Heart left ventricle (tissue), 16 donors: ENCODE measurements at regions of chr12 and their contacts with region 1.

Region 1: DNA sequence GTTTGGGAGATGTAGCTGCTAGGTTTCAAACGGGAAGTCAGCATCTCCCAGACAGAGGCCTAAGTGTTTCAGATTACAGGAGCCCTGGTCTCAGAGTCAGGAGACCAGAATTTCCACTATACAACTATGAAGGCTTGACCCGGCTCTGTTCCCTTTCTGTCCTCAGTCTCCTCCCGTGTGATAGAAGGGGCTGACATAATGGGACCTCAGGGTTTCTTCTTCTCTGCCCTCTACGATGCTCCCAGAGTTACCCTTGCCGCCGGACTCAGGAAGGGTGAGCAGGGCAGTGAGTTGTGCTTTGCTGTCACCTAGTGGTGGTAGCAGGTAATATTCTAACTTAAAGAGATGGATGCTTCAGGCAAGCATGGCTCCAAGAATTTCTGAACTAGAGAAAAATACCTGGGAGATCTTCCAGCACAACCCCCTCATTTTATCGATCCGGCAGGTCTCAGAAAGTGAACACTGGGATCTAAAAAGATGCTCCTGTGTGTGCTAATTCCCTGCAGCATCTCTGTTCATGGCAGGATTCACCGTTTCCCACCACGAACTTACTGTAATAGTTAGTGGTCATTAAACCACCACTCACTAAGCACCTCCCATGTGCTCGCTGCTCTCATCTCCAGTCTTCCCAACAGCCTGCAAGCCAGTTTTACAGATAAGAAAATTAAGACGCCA is 84.4 kb downstream of the VWF start:
- DNase-seq: peak in 3 of 5 donors; percentile 50 to 59 (median 55)
- ATAC-seq: peak; percentile 49 to 79 (median 72)
- H3K4me3 ChIP-seq: no peak overlapping the region
- H3K27ac ChIP-seq: no peak overlapping the region
- H3K4me1 ChIP-seq: peaks cover 0 to 4% (median 0%) of the 10 kb centered on the region in 12 donors
- H3K27me3 ChIP-seq: no peaks in the 10 kb centered on the region
- CTCF ChIP-seq: peak; percentile 74 to 90 (median 84)
- POLR2A ChIP-seq: no peak

Region 2: DNA sequence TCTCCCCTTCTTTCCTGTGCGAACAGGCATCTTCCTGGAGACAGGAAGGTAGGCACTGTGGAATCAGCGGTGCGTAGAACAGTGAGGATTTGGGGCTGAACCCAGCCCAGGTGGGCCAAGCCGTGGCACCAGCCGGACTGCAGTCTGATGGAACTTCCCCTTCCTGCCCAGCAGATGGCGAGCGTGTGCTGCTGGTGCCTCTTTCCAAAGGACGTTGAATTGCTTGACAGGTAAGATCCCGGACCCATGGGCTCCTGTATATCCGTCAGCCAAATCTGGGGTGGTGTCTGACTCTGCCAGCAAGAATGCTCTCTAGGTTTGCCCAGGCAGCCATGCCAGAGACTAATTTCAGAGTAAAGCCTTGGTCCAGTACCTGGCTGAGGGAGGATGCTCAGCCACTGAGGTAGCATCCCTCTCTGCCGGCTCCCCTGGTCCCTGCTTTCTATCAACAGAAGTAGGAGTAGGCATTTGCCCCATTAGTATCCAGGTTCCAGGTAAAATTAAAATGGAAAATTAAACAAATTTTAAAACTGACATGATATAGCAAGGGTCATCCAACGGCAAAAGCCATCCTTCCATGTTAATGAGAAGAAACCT is 1017.5 kb before region 1 on chr12:
- intact Hi-C with region 1: loop called in 1 of 10 experiments (anchors 10 kb)
- DNase-seq: peak in 4 of 5 donors; percentile 32 to 45 (median 43)
- ATAC-seq: peak; percentile 29 to 71 (median 44)
- H3K4me3 ChIP-seq: no peak overlapping the region
- H3K27ac ChIP-seq: no peak overlapping the region
- H3K4me1 ChIP-seq: peaks cover 0 to 24% (median 0%) of the 10 kb centered on the region in 12 donors
- H3K27me3 ChIP-seq: peaks cover 0 to 6% (median 0%) of the 10 kb centered on the region in 9 donors
- CTCF ChIP-seq: peak; percentile 87 to 98 (median 92)
- POLR2A ChIP-seq: no peak

Region 3: DNA sequence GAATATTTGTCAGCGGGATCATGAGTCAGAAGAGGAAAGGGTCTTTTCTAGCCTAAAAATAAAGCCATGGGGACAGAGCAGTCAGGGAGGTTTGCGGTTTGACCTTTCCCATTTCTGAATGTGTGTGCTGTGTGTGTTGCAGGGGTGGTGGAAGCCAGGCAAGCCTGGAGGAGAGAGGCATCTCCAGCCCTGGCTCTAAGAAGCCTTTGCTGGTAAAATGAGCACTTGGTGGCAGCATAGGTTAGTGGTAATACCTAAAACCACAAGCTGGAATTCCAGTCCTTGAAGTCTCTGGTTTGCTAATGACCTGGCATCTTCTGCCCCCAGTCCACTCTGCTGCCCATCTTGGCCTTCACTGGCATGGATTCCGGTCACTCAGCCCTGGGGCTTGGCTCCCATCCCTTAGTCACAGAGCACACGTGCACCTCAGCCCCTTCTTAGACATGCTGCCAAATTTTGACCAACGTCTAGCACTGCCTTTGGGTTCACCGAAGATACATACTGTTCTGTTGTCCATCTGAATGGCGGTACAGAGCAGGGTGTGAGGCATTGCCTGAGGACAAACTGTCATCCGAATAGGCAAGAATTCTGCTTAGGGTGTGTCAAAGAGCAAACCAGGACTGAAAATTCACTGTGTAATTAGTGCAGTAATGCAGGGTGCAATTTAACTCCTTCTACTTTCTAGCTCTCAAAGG is 943.6 kb before region 1 on chr12:
- intact Hi-C with region 1: loop called in 1 of 10 experiments (anchors 10 kb)
- DNase-seq: no peak
- ATAC-seq: peak in 2 of 4 donors; percentile 24 to 49
- H3K4me3 ChIP-seq: no peak overlapping the region
- H3K27ac ChIP-seq: no peak overlapping the region
- H3K4me1 ChIP-seq: peaks cover 0 to 2% (median 0%) of the 10 kb centered on the region in 12 donors
- H3K27me3 ChIP-seq: peaks cover 0 to 21% (median 0%) of the 10 kb centered on the region in 9 donors
- CTCF ChIP-seq: peak in 2 of 12 donors; percentile 9 to 12
- POLR2A ChIP-seq: no peak

Region 4: DNA sequence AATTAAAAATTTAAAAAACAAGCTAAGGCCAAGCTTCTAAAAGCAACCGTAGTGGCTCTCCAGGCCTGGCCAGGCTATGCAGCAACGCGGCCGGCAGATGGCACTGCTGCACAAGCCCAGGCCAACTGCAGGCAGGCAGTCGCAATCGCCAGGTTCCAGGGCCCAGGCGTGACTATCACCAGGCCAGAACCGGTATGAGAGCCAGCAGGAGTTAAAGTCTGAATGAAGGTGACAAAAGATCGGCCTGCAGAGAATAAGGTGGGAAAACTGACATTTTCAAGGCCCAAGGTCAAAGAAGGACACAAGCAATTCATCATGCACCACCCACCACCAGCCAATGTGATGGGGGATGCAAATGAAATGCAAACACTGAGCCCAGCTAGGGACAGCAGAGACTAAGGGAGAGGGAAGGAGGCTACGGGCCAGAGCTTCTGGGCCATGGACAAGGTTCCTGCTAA is 51.3 kb before region 1 on chr12:
- intact Hi-C with region 1: loop called (anchors 1 to 2 kb)
- DNase-seq: peak; percentile 70 to 88 (median 78)
- ATAC-seq: peak; percentile 49 to 92 (median 88)
- H3K4me3 ChIP-seq: no peak overlapping the region
- H3K27ac ChIP-seq: peak overlapping the region in 1 of 12 donors; percentile 28
- H3K4me1 ChIP-seq: peaks cover 0 to 4% (median 0%) of the 10 kb centered on the region in 12 donors
- H3K27me3 ChIP-seq: no peaks in the 10 kb centered on the region
- CTCF ChIP-seq: peak; percentile 89 to 97 (median 92)
- POLR2A ChIP-seq: no peak

Region 5: DNA sequence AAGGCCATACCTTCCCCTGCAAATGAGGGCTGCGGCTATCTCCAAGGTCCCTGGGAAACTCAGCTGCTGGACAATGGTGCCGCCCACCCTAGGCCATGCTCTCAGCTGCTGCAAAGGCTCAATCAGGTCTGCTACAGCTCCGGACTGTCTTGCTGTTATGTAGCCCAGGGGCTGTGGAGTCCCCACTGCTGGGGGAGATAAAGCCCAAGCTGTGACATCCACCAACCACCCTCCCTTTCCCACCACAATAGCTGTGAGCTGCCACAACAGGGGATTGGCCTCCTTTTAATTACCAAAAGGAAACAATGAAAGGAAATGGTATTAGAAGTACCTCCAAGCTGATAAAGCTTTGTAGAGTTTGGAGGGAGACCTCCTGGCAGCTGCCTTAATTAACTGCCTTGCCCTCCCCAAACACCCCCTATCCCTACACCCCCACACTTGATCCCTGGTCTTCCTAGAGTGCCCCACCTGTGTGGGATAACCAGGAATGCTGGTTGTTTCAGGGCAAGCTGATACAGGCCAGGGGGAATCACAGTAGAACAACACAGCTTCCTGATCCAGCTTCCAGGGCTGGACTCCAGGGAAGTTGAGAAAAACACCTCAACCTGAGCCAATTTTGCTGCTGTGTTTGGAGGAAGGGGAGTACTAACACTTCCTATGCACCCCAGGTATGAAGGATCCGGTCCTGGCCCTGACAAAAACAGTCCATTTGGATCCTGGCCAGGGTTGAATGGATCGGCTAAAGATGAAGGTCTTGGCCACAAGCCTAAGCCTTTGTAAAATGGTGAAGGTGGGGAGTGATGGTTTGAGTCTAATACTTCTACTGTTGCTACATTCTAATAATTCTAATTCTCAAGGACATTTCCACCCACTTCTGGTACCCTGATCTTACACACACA is 84.6 kb after region 1 on chr12 and contains the start of gene VWF:
- intact Hi-C with region 1: no loop called
- DNase-seq: peak in 2 of 5 donors; percentile 66 to 75
- ATAC-seq: peak; percentile 67 to 82 (median 73)
- H3K4me3 ChIP-seq: peak within 1 kb of the TSS; percentile 43 to 68 (median 58)
- H3K27ac ChIP-seq: peak within 1 kb of the TSS; percentile 72 to 95 (median 85)
- H3K4me1 ChIP-seq: peaks cover 0 to 21% (median 3%) of the 10 kb centered on the region in 12 donors
- H3K27me3 ChIP-seq: no peaks in the 10 kb centered on the region
- CTCF ChIP-seq: no peak
- POLR2A ChIP-seq: peak in 1 of 2 donors; percentile 55
- total RNA-seq, gene VWF: 187 to 503 (median 258) TPM